Ascending aorta (tissue), 2 donors: ENCODE measurements at regions of chr16 and their contacts with region 1.

Region 1: GRCh38 chr16:19645557-19645981 is 72.5 kb downstream of the KNOP1 start:
- DNase-seq: no peak
- H3K4me3 ChIP-seq: no peak overlapping the region
- H3K27ac ChIP-seq: peak overlapping the region; percentile 45 to 51
- H3K4me1 ChIP-seq: peaks cover 0 to 16% of the 10 kb centered on the region in 2 donors
- H3K27me3 ChIP-seq: no peaks in the 10 kb centered on the region
- CTCF ChIP-seq: no peak

Region 2: GRCh38 chr16:19203374-19204031 is 442.1 kb before region 1 on chr16:
- intact Hi-C with region 1: no loop called
- DNase-seq: no peak
- H3K4me3 ChIP-seq: no peak overlapping the region
- H3K27ac ChIP-seq: no peak overlapping the region
- H3K4me1 ChIP-seq: no peaks in the 10 kb centered on the region
- H3K27me3 ChIP-seq: no peaks in the 10 kb centered on the region
- CTCF ChIP-seq: no peak

Region 3: GRCh38 chr16:19583665-19584300 is 61.8 kb before region 1 on chr16:
- intact Hi-C with region 1: loop called (anchors 10 kb)
- DNase-seq: no peak
- H3K4me3 ChIP-seq: no peak overlapping the region
- H3K27ac ChIP-seq: no peak overlapping the region
- H3K4me1 ChIP-seq: no peaks in the 10 kb centered on the region
- H3K27me3 ChIP-seq: no peaks in the 10 kb centered on the region
- CTCF ChIP-seq: peak; percentile 52 to 79 (median 78)

Region 4: GRCh38 chr16:19757762-19758595 is 112.4 kb after region 1 on chr16:
- intact Hi-C with region 1: loop called (anchors 5 kb)
- DNase-seq: peak in 1 of 2 donors; percentile 1
- H3K4me3 ChIP-seq: no peak overlapping the region
- H3K27ac ChIP-seq: no peak overlapping the region
- H3K4me1 ChIP-seq: peaks cover 0 to 17% of the 10 kb centered on the region in 2 donors
- H3K27me3 ChIP-seq: no peaks in the 10 kb centered on the region
- CTCF ChIP-seq: no peak

Region 5: GRCh38 chr16:19963301-19963700 is 317.7 kb after region 1 on chr16:
- intact Hi-C with region 1: no loop called
- DNase-seq: no peak
- H3K4me3 ChIP-seq: no peak overlapping the region
- H3K27ac ChIP-seq: no peak overlapping the region
- H3K4me1 ChIP-seq: no peaks in the 10 kb centered on the region
- H3K27me3 ChIP-seq: no peaks in the 10 kb centered on the region
- CTCF ChIP-seq: no peak